H1 (cell line): ENCODE measurements at regions of chr12 and their contacts with region 1.

Region 1: DNA sequence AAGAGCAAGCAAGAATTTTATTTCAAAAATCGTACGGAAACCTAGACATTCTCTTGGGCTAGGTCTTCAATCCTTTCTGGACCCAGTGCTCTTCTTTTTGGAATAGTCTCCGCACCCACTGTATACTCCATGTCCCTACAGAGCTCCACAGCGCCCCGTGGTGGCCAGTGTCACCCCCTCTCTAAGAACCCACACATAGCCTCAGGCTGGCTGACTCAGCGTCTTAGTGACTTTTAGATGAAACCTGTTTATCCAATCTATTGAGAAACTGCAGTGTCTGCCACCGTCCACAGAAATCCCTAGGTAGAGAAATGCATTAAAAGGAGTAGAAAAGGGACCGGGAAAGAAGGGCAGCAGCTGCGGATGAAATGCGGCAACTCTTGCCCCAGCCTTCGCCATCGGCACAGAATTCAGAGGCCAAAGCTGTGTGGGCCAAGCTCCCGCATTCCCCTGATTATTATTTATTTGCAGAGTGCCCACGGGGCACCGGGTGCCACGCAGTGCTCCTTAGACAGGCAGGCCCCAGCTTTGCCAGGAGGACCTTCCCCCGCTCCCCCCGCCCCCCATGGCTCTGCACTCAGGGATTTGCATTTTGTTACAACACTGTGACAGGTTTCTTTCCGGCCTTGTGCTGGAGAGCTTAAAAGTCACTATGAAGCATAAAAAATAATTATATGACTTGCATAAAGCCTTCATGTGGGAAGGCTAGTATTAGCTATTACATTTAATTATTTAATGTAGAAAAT is 170.1 kb upstream of the FKBP4 start:
- DNase-seq: peak; percentile 62 to 89
- H3K4me3 ChIP-seq: no peak overlapping the region; a peak in 1 of 8 replicates
- H3K27ac ChIP-seq: no peak overlapping the region
- H3K4me1 ChIP-seq: peaks cover 3 to 25% (median 14%) of the 10 kb centered on the region in 4 experiments; a peak in 5 of 7 replicates
- H3K27me3 ChIP-seq: 0 out of 7 replicates have a peak, but pooled peaks cover 0 to 3% (median 0%) of the 10 kb centered on the region in 4 experiments
- CTCF ChIP-seq: peak; percentile 75 to 83 (median 82)
- EP300 ChIP-seq: no peak
- POLR2A ChIP-seq: no peak
- RAD21 ChIP-seq: peak; percentile 64 to 74

Region 2: DNA sequence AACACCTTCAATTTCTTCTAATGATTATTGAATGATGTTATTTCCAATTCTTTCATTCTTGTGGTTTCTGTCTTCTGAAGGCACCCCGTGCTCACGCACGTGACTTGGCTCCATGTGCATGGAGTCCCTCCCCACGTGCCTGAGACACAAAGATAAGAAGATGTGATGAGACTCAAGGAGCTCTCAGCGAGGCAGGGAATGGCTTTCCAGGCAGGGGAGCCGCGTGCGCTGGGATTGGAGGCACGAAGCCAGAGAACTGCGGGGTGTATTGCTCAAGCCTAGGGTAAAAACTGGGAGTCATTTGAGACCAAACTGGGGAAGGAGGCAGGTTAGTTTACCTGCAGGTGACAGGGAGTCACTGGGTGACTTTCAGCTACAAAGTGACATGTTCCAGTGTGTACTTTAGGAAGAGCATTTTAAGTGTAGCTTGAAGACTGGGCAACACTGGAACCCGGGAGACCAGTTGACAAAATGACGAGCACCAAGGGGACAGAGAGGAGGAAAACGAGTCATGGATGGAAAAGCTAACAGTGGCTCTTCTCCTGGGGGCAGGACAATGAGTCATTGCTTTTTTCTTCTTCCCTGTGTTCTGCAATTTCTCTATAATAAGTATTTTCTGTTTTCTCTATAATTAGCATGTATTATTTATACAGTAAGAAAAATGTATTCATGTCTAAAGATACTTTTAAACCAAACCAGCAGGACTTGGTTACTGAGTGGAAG is 141.6 kb before region 1 on chr12:
- CTCF ChIA-PET with region 1: no interaction called
- POLR2A ChIA-PET with region 1: no interaction called
- DNase-seq: no peak
- H3K4me3 ChIP-seq: no peak overlapping the region
- H3K27ac ChIP-seq: no peak overlapping the region
- H3K4me1 ChIP-seq: no peaks in the 10 kb centered on the region
- H3K27me3 ChIP-seq: no peaks in the 10 kb centered on the region
- CTCF ChIP-seq: no peak
- EP300 ChIP-seq: no peak
- POLR2A ChIP-seq: no peak
- RAD21 ChIP-seq: no peak

Region 3: GRCh38 chr12:2613326-2614073 is 11.2 kb before region 1 on chr12:
- CTCF ChIA-PET with region 1: interaction called, 24 read pairs
- POLR2A ChIA-PET with region 1: interaction called, 4 read pairs
- DNase-seq: no peak
- H3K4me3 ChIP-seq: no peak overlapping the region
- H3K27ac ChIP-seq: no peak overlapping the region
- H3K4me1 ChIP-seq: no peaks in the 10 kb centered on the region
- H3K27me3 ChIP-seq: no peaks in the 10 kb centered on the region; a peak in 1 of 7 replicates
- CTCF ChIP-seq: no peak
- EP300 ChIP-seq: no peak
- POLR2A ChIP-seq: no peak
- RAD21 ChIP-seq: no peak

Region 4: DNA sequence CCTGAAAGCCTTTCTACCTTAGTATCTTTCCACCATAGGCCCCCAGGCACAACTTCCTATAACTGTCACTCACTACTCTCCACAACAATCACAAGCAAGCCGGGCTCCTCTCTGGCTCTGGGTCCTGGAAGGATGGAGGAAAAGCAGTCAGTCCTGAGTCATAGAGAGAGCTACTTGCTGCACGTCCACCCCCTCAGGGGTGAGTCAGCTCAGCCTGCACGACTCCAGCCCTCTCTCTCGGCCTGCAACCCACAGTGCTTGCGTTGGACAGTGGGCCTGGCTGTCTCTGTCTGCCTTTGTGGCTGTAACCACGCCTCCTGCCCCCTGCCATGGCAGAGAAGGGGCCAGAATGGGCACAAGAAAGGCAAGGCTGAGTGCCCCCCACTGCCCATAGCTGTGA is 16.0 kb after region 1 on chr12:
- CTCF ChIA-PET with region 1: interaction called, 16 read pairs
- POLR2A ChIA-PET with region 1: interaction called, 3 read pairs
- DNase-seq: no peak
- H3K4me3 ChIP-seq: peak overlapping the region in 1 of 4 experiments; percentile 11; a peak in 1 of 8 replicates
- H3K27ac ChIP-seq: no peak overlapping the region
- H3K4me1 ChIP-seq: peaks cover 5 to 10% (median 7%) of the 10 kb centered on the region in 4 experiments
- H3K27me3 ChIP-seq: no peaks in the 10 kb centered on the region
- CTCF ChIP-seq: no peak
- EP300 ChIP-seq: no peak
- POLR2A ChIP-seq: no peak
- RAD21 ChIP-seq: no peak

Region 5: GRCh38 chr12:2652401-2653081 is 27.8 kb after region 1 on chr12:
- CTCF ChIA-PET with region 1: interaction called, 16 read pairs
- POLR2A ChIA-PET with region 1: no interaction called
- DNase-seq: peak in 1 of 2 experiments; percentile 69
- H3K4me3 ChIP-seq: no peak overlapping the region
- H3K27ac ChIP-seq: no peak overlapping the region
- H3K4me1 ChIP-seq: peaks cover 0 to 5% (median 0%) of the 10 kb centered on the region in 4 experiments; a peak in 1 of 7 replicates
- H3K27me3 ChIP-seq: no peaks in the 10 kb centered on the region
- CTCF ChIP-seq: peak; percentile 59 to 76 (median 66)
- EP300 ChIP-seq: no peak
- POLR2A ChIP-seq: no peak
- RAD21 ChIP-seq: peak; percentile 62 to 77